Prostate gland (tissue), 2 donors: ENCODE measurements at regions of chr1 and their contacts with region 1.

Region 1: GRCh38 chr1:75265792-75266191 is 131.6 kb downstream of the LHX8 start:
- DNase-seq: no peak
- H3K4me3 ChIP-seq: no peak overlapping the region
- H3K27ac ChIP-seq: no peak overlapping the region
- H3K4me1 ChIP-seq: no peaks in the 10 kb centered on the region
- H3K27me3 ChIP-seq: no peaks in the 10 kb centered on the region
- CTCF ChIP-seq: peak in 3 of 4 experiments; percentile 27 to 51 (median 34)
- POLR2A ChIP-seq: no peak

Region 2: GRCh38 chr1:75632350-75632949 is 366.7 kb after region 1 on chr1:
- intact Hi-C with region 1: loop called (anchors 5 kb)
- DNase-seq: no peak
- H3K4me3 ChIP-seq: no peak overlapping the region
- H3K27ac ChIP-seq: no peak overlapping the region
- H3K4me1 ChIP-seq: no peaks in the 10 kb centered on the region
- H3K27me3 ChIP-seq: no peaks in the 10 kb centered on the region
- CTCF ChIP-seq: peak; percentile 29 to 67 (median 49)
- POLR2A ChIP-seq: no peak